Adrenal gland (tissue), 19 donors: ENCODE measurements at regions of chr7 and their contacts with region 1.

Region 1: DNA sequence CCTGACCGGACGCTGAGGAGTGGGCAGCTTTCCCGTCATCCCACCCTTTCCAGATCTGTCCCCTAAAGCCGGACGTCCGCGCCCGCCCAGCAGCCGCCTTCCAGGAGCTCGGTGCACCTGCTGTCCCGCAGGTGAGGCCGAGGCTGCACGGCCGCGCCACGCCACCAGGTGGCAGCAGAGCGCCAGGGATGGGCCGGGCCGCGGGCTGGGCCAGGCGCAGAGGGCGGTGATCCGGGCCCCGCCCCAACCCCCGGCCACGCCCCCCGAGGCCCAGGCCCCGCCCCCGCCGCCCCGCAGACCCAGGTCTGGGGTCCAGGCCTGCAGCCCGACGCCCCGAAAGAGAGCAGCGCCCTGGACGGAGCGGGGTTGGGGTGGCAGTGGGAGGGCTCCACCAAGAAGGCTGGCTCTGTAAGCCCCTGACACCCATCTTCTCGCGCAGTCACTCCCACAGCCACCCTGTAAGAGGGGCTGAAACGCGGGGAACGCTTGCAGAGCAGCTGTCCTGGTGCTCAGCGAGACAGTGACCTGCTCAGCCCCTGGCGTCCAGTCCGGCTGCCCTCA is 32.2 kb downstream of the FOXL3 start:
- DNase-seq: peak in 6 of 7 donors; percentile 41 to 75 (median 70)
- H3K4me3 ChIP-seq: no peak overlapping the region
- H3K27ac ChIP-seq: no peak overlapping the region
- H3K4me1 ChIP-seq: no peaks in the 10 kb centered on the region
- H3K27me3 ChIP-seq: no peaks in the 10 kb centered on the region
- CTCF ChIP-seq: peak; percentile 53 to 96 (median 83)
- POLR2A ChIP-seq: no peak

Region 2: GRCh38 chr7:503575-504111 is 181.5 kb after region 1 on chr7:
- intact Hi-C with region 1: loop called in 1 of 2 experiments (anchors 5 kb)
- DNase-seq: no peak
- H3K4me3 ChIP-seq: no peak overlapping the region
- H3K27ac ChIP-seq: no peak overlapping the region
- H3K4me1 ChIP-seq: no peaks in the 10 kb centered on the region
- H3K27me3 ChIP-seq: no peaks in the 10 kb centered on the region
- CTCF ChIP-seq: no peak
- POLR2A ChIP-seq: no peak

Region 3: DNA sequence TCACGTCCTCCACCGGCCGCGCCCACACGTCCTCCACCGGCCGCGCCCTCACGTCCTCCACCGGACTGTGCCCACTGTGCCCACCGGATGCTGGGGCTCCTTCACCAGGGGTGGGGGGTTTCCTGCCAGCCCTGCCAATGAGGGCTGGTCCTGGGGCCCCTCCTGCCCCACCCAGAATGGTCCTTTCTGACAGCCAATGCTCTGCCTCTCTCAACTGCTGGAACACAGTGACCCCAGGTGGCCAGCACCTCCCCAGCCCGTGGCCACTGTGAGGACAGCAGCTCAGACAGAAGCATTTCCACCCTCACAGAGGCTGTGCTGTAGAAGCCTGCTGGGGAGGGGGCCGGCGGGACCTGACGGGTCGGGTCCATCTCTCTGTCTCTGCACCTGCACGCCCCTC is 314.2 kb after region 1 on chr7:
- intact Hi-C with region 1: loop called in 1 of 2 experiments (anchors 10 kb)
- DNase-seq: peak in 1 of 7 donors; percentile 30
- H3K4me3 ChIP-seq: no peak overlapping the region
- H3K27ac ChIP-seq: no peak overlapping the region
- H3K4me1 ChIP-seq: no peaks in the 10 kb centered on the region
- H3K27me3 ChIP-seq: no peaks in the 10 kb centered on the region
- CTCF ChIP-seq: peak in 4 of 6 experiments; percentile 24 to 46 (median 32)
- POLR2A ChIP-seq: no peak

Region 4: DNA sequence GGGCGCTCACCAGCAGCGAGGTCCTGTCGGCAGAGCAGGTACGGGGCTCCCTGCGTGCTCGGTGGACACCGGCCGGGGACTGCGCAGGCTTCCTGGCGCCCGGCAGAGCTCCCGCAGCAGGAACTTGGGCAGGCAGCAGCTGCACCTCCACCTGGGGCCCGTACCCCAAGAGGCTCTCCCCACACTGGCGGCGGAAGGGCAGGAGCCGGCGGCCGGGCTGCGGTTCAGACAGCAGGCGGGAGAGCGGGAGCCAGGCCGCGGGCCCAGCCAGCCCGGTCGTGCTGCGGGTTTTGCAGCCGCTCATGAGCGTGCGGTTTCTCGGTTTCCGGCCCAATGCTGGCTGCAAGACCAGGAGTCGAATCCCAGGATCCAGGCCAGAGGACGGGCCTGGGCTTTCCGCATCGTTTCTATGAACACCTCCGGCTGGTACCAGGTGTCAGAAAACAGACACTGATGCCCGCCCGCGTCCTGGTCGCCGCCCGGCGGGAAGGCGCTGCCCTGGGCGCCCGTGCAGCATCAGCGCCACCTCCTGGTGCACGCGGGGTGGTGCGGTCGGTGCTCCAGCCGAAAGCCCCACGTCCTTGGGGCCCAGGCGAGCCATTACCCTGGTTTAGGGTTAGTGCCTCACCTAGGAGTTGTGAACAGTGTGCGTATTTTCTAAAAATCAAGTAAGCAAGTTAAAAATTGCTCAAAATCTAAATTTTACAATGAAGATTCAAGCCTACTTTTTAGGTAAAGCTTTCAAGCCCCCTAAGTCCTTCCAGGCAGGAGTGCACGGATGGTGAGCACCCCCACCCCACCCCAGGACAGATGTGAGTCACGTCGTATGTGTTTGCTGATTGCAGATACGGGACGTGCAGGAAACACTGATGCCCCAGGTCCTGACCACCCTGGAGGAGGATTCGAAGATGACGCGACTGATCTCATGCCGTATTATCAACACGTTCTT is 452.2 kb after region 1 on chr7:
- intact Hi-C with region 1: loop called (anchors 2 to 5 kb)
- DNase-seq: peak; percentile 43 to 76 (median 56)
- H3K4me3 ChIP-seq: no peak overlapping the region
- H3K27ac ChIP-seq: no peak overlapping the region
- H3K4me1 ChIP-seq: peaks cover 0 to 16% of the 10 kb centered on the region in 2 donors
- H3K27me3 ChIP-seq: no peaks in the 10 kb centered on the region
- CTCF ChIP-seq: peak; percentile 65 to 96 (median 88)
- POLR2A ChIP-seq: no peak

Region 5: DNA sequence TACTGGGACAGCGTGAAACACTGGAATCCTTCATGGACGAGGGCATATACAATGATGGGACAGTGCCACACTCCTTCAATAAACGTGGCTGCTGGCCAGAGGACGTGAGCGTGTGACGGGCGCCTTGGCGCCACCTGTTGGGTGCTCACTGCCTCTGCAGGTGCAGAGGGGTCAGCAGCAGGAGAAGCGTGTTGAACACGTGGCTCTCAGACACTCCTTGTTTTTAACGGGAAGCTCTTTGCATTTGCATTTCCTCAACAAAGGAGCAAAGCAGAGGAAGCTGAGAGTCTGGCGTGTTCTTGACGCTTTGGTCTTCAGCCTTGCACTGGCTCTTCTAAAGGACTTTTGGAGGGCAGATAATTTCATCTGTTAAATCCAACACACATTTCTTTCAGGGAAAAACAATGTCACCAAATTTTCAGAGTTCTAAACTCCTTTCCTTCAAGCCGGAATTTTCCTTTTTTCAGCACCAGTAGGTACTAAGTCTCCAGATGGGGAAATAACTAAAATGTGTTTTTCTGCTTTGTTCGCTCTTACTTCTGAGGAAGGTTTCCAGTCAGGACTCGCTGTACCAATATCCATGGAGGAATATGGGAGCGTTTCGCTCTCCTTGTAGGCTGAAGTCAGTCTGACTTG is 551.3 kb after region 1 on chr7:
- intact Hi-C with region 1: loop called in 1 of 2 experiments (anchors 5 kb)
- DNase-seq: peak; percentile 83 to 95 (median 90)
- H3K4me3 ChIP-seq: no peak overlapping the region
- H3K27ac ChIP-seq: peak overlapping the region in 3 of 5 donors; percentile 54 to 62 (median 55)
- H3K4me1 ChIP-seq: peaks cover 15 to 26% of the 10 kb centered on the region in 2 donors
- H3K27me3 ChIP-seq: no peaks in the 10 kb centered on the region
- CTCF ChIP-seq: peak; percentile 82 to 95 (median 94)
- POLR2A ChIP-seq: no peak

Region 6: GRCh38 chr7:930975-931758 is 609.0 kb after region 1 on chr7:
- intact Hi-C with region 1: loop called in 1 of 2 experiments (anchors 5 kb)
- DNase-seq: no peak
- H3K4me3 ChIP-seq: no peak overlapping the region
- H3K27ac ChIP-seq: no peak overlapping the region
- H3K4me1 ChIP-seq: no peaks in the 10 kb centered on the region
- H3K27me3 ChIP-seq: no peaks in the 10 kb centered on the region
- CTCF ChIP-seq: no peak
- POLR2A ChIP-seq: no peak